ENCODE measurements at regions of chr4 and their contacts with region 1.

Region 1: GRCh38 chr4:86957214-86957613 is 22.4 kb downstream of the AFF1 start:
- DNase-seq: no peak
- H3K4me3 Mint-ChIP-seq: no peak overlapping the region
- H3K27ac Mint-ChIP-seq: peak overlapping the region; percentile 55
- H3K4me1 Mint-ChIP-seq: peaks cover 49% of the 10 kb centered on the region
- H3K27me3 Mint-ChIP-seq: no peaks in the 10 kb centered on the region

Region 2: GRCh38 chr4:86970426-86971354 is 13.5 kb after region 1 on chr4:
- CTCF ChIA-PET with region 1: no interaction called
- POLR2A ChIA-PET with region 1: no interaction called
- intact Hi-C with region 1: loop called (anchors 1 kb)
- DNase-seq: no peak
- H3K4me3 Mint-ChIP-seq: no peak overlapping the region
- H3K27ac Mint-ChIP-seq: no peak overlapping the region
- H3K4me1 Mint-ChIP-seq: peaks cover 40% of the 10 kb centered on the region
- H3K27me3 Mint-ChIP-seq: no peaks in the 10 kb centered on the region

Measured in activated CD4-positive, alpha-beta memory T cell treated with anti-CD3 and anti-CD28 coated beads for 36 hours (primary cell).